ENCODE measurements at regions of chr5 and their contacts with region 1.

Region 1: DNA sequence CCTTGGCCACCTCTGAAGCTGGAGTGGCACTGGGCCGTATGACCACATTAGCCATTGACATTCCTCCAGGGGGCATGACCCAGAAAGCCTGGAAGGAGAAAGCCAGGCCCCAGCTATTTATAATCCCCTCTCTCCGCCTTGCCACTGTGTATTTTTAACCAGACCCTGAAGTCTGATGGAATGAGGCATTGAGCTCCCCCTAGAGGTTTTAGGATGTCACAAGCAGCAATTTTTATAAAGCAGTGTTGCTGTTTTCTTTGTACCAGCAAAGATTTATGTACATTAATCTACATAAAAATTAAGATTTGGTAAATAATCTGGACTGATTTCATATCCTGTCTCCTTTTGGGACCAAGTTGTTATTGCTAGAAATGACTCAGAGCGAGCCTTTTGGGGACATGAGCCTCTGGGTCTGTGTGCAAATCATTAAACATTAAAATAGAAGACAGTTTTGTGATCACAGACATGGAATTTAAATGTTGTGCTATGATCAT is 127.1 kb downstream of the TRIO start:
- DNase-seq: no peak
- ATAC-seq: peak; percentile 93

Region 2: GRCh38 chr5:13783726-13784125 is 486.5 kb before region 1 on chr5:
- intact Hi-C with region 1: no loop called
- DNase-seq: peak; percentile 27
- ATAC-seq: no peak

Region 3: GRCh38 chr5:14011089-14012004 is 258.9 kb before region 1 on chr5:
- intact Hi-C with region 1: loop called (anchors 10 kb)
- DNase-seq: peak; percentile 92
- ATAC-seq: peak; percentile 92

Region 4: GRCh38 chr5:14108170-14108996 is 161.9 kb before region 1 on chr5:
- intact Hi-C with region 1: loop called (anchors 1 kb)
- DNase-seq: peak; percentile 52
- ATAC-seq: peak; percentile 85

Region 5: DNA sequence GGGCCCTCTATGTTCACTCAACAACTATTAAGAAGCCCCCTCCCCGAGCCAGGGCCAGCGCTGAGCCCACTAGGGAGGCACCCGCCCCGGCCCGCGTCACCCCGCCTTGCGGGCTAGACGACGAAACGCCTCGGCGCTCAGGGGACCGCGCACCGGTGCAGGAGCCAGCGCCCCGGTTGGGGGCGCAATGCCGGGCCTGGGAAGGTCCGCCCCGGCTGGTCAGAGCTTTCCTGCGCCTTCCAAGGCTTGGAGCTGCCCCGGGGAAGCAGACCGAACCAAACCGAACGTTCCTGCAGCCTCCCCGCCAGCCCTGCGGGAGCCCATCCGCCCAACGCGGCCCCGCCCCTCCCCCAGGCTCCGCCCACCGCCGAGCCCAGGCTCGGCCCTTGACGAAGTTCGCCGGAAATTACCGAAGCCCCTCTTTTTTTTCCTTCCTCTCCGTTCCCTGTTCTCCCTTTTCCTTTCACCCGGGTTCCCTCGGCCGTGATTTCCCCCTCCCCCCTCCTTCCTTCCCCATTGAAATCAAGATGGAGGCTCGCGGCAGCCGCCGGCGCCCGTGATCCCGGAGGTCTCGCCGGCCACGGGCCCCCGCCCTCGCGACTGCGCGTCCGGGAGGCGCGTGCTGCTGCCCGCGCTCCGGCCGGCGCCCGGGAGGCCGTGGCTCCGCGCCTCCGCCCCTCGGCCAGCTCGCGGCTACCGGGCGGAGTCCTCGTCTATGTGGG is 127.3 kb before region 1 on chr5 and contains the start of gene TRIO:
- intact Hi-C with region 1: loop called (anchors 2 kb)
- DNase-seq: peak; percentile 92
- ATAC-seq: peak; percentile 86
- total RNA-seq, gene TRIO: 56.9 TPM

Region 6: DNA sequence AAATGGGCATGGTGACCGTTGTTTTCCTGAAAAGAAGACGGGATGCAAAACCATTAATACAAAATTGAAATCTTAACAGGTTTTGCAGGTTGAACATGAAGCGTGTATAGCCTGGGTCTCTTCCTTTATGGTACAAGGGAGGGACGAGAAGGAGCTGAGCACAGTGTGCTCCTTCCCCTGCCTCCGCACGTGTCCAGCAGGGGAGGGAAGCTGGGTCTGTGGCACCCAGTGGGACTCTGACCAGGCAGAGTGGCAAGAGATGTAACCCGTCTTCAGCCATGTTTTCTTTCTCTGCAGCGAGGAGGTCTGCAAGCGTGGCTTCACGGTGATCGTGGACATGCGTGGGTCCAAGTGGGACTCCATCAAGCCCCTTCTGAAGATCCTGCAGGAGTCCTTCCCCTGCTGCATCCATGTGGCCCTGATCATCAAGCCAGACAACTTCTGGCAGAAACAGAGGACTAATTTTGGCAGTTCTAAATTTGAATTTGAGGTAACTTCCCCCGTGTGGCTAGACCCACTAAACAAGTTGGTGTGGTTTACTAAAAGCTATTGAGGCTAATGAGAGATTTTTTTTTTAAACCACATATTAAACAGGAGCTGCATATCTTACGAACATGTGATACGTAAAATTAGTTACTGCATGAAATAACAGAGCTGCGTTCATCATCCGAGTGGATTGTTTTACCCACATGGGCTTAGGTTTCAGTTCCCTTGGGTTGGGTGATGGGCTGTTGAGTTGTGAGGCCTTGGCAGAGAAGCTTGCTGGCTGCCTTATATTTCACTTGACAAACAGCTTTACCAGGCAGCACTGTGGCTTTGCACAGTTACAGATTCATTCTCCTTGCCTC is 16.5 kb after region 1 on chr5:
- intact Hi-C with region 1: no loop called
- DNase-seq: no peak
- ATAC-seq: peak; percentile 52